Activated naive CD4-positive, alpha-beta T cell treated with anti-CD3 and anti-CD28 coated beads, Interleukin-2, amount 10 ng/mL, durations not matched to agents 7 days and 5 days (primary cell): ENCODE measurements at regions of chr14 and their contacts with region 1.

Region 1: GRCh38 chr14:22549981-22550673 is 38.9 kb downstream of the DAD1 start:
- DNase-seq: peak; percentile 69
- H3K4me3 Mint-ChIP-seq: peak overlapping the region; percentile 67
- H3K27ac Mint-ChIP-seq: peak overlapping the region; percentile 95
- H3K4me1 Mint-ChIP-seq: peaks cover 95% of the 10 kb centered on the region
- H3K27me3 Mint-ChIP-seq: peaks cover 4% of the 10 kb centered on the region

Region 2: GRCh38 chr14:22536853-22537338 is 13.2 kb before region 1 on chr14:
- CTCF ChIA-PET with region 1: interaction called, 18 read pairs
- DNase-seq: peak; percentile 80
- H3K4me3 Mint-ChIP-seq: peak overlapping the region; percentile 71
- H3K27ac Mint-ChIP-seq: peak overlapping the region; percentile 89
- H3K4me1 Mint-ChIP-seq: peaks cover 97% of the 10 kb centered on the region
- H3K27me3 Mint-ChIP-seq: no peaks in the 10 kb centered on the region

Region 3: DNA sequence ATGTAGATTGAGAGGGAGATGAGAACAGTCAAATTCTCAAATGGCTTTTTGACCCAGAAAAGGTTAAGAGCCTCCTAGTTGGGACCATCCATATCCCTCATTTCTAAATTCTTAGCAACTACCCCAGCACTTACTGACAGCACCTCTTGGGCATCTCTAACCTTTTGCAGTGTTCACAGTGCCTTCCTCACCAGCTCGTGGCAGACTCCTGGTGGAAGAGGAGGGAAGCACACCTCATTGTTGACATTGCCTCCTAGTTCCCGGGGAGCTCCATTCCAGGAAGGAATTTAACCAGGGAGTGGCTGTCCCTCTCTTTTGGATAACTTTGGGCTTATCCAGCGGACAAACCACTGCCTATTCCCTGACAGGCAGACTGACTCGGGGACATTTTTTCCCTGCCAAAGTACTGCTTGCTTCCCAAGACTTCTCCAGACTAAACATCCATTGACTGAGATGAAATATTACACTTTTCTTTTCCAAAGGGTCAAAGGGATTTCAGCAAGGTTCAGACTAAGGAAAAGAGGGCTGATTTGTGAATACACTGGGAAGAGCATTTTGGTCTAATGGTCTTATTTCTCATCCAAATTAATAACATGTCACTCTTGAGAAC is 103.0 kb after region 1 on chr14:
- CTCF ChIA-PET with region 1: no interaction called
- DNase-seq: peak; percentile 70
- H3K4me3 Mint-ChIP-seq: no peak overlapping the region
- H3K27ac Mint-ChIP-seq: no peak overlapping the region
- H3K4me1 Mint-ChIP-seq: no peaks in the 10 kb centered on the region
- H3K27me3 Mint-ChIP-seq: no peaks in the 10 kb centered on the region